ENCODE measurements at regions of chr9 and their contacts with region 1.

Region 1: GRCh38 chr9:123251741-123252140 is 16.6 kb downstream of the STRBP start:
- DNase-seq: no peak
- H3K4me3 ChIP-seq: no peak overlapping the region
- H3K27ac ChIP-seq: no peak overlapping the region
- H3K4me1 ChIP-seq: no peaks in the 10 kb centered on the region
- H3K27me3 ChIP-seq: no peaks in the 10 kb centered on the region
- CTCF ChIP-seq: no peak

Region 2: DNA sequence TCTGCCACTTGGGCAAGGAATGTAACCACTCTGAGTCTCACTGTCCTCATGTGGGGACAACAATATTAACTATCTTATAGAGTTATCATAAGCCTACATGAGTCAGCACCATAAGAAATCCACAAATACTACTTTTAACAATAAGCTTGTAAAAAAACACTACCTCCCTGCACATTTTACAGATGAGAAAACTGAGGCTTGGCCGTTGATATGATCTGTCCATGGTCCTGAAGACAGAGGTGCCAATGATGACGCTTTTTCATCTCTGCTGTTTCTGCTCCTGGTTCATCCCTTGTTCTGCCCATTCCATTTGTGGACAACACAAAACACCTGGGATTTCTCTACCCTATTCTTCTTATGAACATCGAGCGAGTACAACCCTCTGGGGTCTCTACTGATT is 40.0 kb after region 1 on chr9:
- CTCF ChIA-PET with region 1: no interaction called
- dilution Hi-C with region 1: loop called (anchors 5 kb)
- in situ Hi-C with region 1: no loop called
- intact Hi-C with region 1: no loop called
- DNase-seq: no peak
- H3K4me3 ChIP-seq: no peak overlapping the region
- H3K27ac ChIP-seq: no peak overlapping the region
- H3K4me1 ChIP-seq: no peaks in the 10 kb centered on the region
- H3K27me3 ChIP-seq: no peaks in the 10 kb centered on the region
- CTCF ChIP-seq: no peak

Measured in mammary epithelial cell (primary cell).